HCT116 (cell line): ENCODE measurements at regions of chr13 and their contacts with region 1.

Region 1: GRCh38 chr13:26946684-26947343 is 186.2 kb upstream of the GPR12 start:
- DNase-seq: peak; percentile 44
- ATAC-seq: peak; percentile 96
- H3K4me3 ChIP-seq: no peak overlapping the region
- H3K27ac ChIP-seq: no peak overlapping the region
- H3K4me1 ChIP-seq: peaks cover 0 to 2% of the 10 kb centered on the region in 2 experiments; a peak in 1 of 4 replicates
- H3K27me3 ChIP-seq: peaks cover 4% of the 10 kb centered on the region; the same call in 1 of the 2 replicates
- CTCF ChIP-seq: peak; percentile 62 to 81 (median 74)
- POLR2A ChIP-seq: no peak
- RAD21 ChIP-seq: peak; percentile 86

Region 2: DNA sequence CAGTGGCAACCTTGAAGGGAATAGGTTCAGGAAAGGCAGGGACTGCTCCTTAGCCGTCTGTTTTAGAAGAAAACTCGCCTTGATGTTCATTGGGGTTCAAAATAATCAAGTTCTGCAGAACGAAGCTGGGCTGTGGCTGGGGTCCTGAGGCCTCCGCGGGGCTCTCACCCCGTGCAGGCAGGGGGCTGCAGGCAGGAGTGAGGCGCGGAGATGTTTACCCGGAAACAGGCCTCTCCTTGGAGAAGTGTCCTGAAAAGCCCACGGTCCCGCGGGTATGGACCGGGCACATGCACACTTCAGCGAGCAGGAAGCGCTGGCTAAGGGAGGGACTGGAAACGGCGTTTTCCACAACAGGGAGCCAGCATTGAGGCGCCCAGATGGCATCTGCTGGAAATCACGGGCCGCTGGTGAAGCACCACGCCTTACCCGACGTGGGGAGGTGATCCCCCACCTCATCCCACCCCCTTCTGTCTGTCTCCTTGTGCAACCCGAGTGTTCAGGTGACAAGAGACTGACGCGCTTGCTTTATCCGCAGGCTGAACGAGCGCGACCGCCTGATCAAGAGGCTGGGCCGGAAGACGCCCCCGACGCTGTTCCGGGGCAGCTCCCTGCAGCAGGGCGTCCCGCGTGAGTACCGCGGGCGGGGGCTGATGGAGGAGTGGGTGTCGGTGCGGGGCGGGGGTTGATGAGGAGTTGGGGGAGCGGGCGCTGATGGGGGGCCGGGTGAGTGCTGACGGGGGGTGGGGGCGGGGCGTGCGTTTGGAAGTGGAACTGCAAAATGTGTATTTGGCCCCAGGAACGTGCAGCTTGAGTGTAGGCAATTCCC is 934.6 kb before region 1 on chr13:
- CTCF ChIA-PET with region 1: no interaction called
- POLR2A ChIA-PET with region 1: no interaction called
- RAD21 ChIA-PET with region 1: no interaction called
- intact Hi-C with region 1: no loop called
- DNase-seq: no peak
- ATAC-seq: no peak
- H3K4me3 ChIP-seq: no peak overlapping the region
- H3K27ac ChIP-seq: no peak overlapping the region
- H3K4me1 ChIP-seq: no peaks in the 10 kb centered on the region
- H3K27me3 ChIP-seq: peaks cover 33% of the 10 kb centered on the region
- CTCF ChIP-seq: no peak
- POLR2A ChIP-seq: no peak
- RAD21 ChIP-seq: no peak

Region 3: DNA sequence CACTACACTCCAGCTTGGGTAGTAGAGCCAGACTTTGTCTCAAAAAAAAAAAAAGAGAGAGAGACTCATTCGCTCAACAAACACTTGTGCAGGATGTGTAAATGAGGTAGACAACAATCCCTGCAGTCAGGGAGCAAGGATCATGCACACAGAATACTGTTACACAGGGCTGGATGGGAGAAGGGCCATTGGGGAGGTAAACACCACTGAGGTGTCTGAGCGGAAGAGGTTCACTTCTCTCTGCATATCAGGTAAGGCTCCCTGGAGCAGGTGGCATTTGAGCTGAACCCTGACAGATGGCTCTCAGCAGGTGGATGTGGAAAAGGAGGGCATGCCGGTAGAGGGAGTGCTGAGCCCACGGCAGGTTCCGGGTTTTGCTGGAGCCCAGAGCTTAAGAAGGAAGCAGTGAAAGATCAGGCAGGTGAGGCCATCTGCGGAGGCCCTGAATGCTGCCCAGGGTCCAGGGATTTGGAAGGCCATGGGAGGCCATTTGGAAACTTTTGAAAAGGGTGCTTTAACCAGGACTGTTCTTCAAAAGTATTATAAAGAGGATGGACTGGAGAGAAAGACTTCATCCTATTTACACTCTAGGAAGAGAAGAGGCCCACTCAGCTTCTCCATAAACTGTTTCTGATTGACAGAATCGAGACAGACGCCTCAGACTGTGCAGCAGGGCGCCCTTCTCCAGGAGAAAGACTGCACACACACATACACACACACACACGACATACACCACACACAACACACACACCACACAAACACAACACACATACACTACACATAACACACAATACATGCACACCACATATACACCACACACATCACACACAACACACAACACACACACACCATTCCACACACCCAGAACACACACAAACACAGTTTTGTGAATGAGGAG is 25.4 kb after region 1 on chr13:
- CTCF ChIA-PET with region 1: interaction called, 16 read pairs
- POLR2A ChIA-PET with region 1: no interaction called
- RAD21 ChIA-PET with region 1: no interaction called
- intact Hi-C with region 1: no loop called
- DNase-seq: peak; percentile 26
- ATAC-seq: peak; percentile 77
- H3K4me3 ChIP-seq: no peak overlapping the region
- H3K27ac ChIP-seq: no peak overlapping the region; the same call in 1 of the 2 replicates
- H3K4me1 ChIP-seq: no peaks in the 10 kb centered on the region
- H3K27me3 ChIP-seq: no peaks in the 10 kb centered on the region
- CTCF ChIP-seq: peak in 2 of 3 experiments; percentile 35 to 51; a peak in 4 of 6 replicates
- POLR2A ChIP-seq: no peak
- RAD21 ChIP-seq: peak; percentile 31; the same call in 1 of the 2 replicates

Region 4: GRCh38 chr13:27079421-27079958 is 132.7 kb after region 1 on chr13:
- CTCF ChIA-PET with region 1: no interaction called
- POLR2A ChIA-PET with region 1: no interaction called
- RAD21 ChIA-PET with region 1: no interaction called
- intact Hi-C with region 1: no loop called
- DNase-seq: no peak
- ATAC-seq: no peak
- H3K4me3 ChIP-seq: no peak overlapping the region
- H3K27ac ChIP-seq: no peak overlapping the region
- H3K4me1 ChIP-seq: no peaks in the 10 kb centered on the region
- H3K27me3 ChIP-seq: no peaks in the 10 kb centered on the region
- CTCF ChIP-seq: no peak
- POLR2A ChIP-seq: no peak
- RAD21 ChIP-seq: no peak

Region 5: DNA sequence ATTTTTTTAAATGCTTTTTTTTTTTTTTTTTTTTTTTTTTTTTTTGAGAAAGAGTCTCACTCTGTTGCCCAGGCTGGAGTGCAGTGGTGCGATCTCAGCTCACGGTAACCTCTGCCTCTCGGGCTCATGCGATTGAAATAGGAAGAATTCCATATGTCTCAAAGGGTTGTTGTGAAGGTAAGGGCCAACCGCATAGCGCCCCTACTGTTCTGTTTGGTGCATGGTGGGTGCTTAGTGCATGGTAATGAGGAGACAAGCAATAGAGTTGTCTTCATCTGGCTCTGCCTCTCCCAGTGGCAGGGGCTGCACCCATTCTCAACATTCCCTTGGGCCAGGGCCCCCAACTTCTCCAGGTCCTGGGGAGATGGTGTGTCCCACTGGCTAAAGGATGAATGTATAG is 392.5 kb after region 1 on chr13:
- CTCF ChIA-PET with region 1: interaction called, 10 read pairs
- POLR2A ChIA-PET with region 1: no interaction called
- RAD21 ChIA-PET with region 1: interaction called in 1 of 2 experiments, 3 read pairs
- intact Hi-C with region 1: no loop called
- DNase-seq: peak; percentile 78
- ATAC-seq: peak; percentile 96
- H3K4me3 ChIP-seq: peak overlapping the region; percentile 12 to 27; a peak in 2 of 4 replicates
- H3K27ac ChIP-seq: no peak overlapping the region
- H3K4me1 ChIP-seq: 0 out of 4 replicates have a peak, but pooled peaks cover 0 to 13% of the 10 kb centered on the region in 2 experiments
- H3K27me3 ChIP-seq: no peaks in the 10 kb centered on the region
- CTCF ChIP-seq: peak; percentile 45 to 90 (median 63); a peak in 5 of 6 replicates
- POLR2A ChIP-seq: no peak
- RAD21 ChIP-seq: peak; percentile 46

Region 6: DNA sequence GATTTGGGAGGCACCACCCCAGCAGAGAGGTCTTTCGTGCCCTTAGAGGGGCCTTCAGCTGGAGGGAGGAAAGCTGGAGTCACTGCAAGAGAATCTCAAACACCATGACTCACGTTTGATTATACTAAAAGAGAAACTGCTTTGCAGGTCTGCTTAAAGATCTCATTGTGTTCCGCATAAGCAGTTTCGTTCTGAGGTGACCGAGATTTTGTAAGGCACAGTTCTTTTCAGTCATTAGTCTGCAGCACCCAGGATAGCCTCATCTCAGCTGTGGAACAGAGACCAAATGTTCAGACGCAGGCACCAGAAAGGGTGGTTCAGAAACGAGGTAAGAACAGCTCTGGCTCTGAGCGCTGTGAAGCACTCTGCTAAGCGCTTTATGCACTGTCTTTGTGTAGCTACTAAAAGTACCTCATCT is 406.4 kb after region 1 on chr13:
- CTCF ChIA-PET with region 1: interaction called, 60 read pairs
- POLR2A ChIA-PET with region 1: no interaction called
- RAD21 ChIA-PET with region 1: interaction called, 3 to 4 read pairs
- intact Hi-C with region 1: no loop called
- DNase-seq: no peak
- ATAC-seq: no peak
- H3K4me3 ChIP-seq: no peak overlapping the region
- H3K27ac ChIP-seq: no peak overlapping the region
- H3K4me1 ChIP-seq: peaks cover 0 to 4% of the 10 kb centered on the region in 2 experiments; a peak in 2 of 4 replicates
- H3K27me3 ChIP-seq: no peaks in the 10 kb centered on the region
- CTCF ChIP-seq: no peak
- POLR2A ChIP-seq: no peak
- RAD21 ChIP-seq: no peak

Region 7: DNA sequence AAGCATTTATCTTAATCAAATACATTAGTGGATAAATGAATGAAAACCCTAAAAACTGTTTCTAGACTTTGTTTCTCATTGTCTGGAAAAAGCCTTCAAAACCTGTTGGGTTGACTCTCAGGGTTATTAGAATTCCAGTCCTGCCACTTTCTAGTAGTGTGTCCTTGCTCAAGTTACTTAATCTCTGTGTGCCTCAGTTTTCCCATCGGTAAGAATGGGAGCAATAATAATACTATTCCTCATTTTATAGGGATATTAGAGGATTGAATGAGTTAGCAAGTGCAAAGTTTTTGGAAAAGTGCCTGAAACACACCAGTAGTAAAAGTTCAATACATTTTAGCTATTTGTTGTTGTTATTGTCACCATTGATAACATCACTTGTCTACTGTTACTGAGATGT is 1038.8 kb after region 1 on chr13:
- CTCF ChIA-PET with region 1: interaction called, 13 read pairs
- POLR2A ChIA-PET with region 1: no interaction called
- RAD21 ChIA-PET with region 1: no interaction called
- intact Hi-C with region 1: loop called (anchors 10 kb)
- DNase-seq: no peak
- ATAC-seq: no peak
- H3K4me3 ChIP-seq: no peak overlapping the region
- H3K27ac ChIP-seq: no peak overlapping the region
- H3K4me1 ChIP-seq: no peaks in the 10 kb centered on the region
- H3K27me3 ChIP-seq: no peaks in the 10 kb centered on the region
- CTCF ChIP-seq: no peak
- POLR2A ChIP-seq: no peak
- RAD21 ChIP-seq: no peak

Region 8: GRCh38 chr13:27997904-27998522 is 1051.2 kb after region 1 on chr13:
- CTCF ChIA-PET with region 1: no interaction called
- POLR2A ChIA-PET with region 1: no interaction called
- RAD21 ChIA-PET with region 1: no interaction called
- intact Hi-C with region 1: loop called (anchors 10 kb)
- DNase-seq: peak; percentile 70
- ATAC-seq: peak; percentile 98
- H3K4me3 ChIP-seq: no peak overlapping the region
- H3K27ac ChIP-seq: peak overlapping the region; percentile 5; the same call in 1 of the 2 replicates
- H3K4me1 ChIP-seq: peaks cover 0 to 9% of the 10 kb centered on the region in 2 experiments; a peak in 2 of 4 replicates
- H3K27me3 ChIP-seq: no peaks in the 10 kb centered on the region
- CTCF ChIP-seq: peak; percentile 67 to 89 (median 73)
- POLR2A ChIP-seq: no peak
- RAD21 ChIP-seq: peak; percentile 79